Caco-2 (cell line): ENCODE measurements at regions of chr4 and their contacts with region 1.

Region 1: DNA sequence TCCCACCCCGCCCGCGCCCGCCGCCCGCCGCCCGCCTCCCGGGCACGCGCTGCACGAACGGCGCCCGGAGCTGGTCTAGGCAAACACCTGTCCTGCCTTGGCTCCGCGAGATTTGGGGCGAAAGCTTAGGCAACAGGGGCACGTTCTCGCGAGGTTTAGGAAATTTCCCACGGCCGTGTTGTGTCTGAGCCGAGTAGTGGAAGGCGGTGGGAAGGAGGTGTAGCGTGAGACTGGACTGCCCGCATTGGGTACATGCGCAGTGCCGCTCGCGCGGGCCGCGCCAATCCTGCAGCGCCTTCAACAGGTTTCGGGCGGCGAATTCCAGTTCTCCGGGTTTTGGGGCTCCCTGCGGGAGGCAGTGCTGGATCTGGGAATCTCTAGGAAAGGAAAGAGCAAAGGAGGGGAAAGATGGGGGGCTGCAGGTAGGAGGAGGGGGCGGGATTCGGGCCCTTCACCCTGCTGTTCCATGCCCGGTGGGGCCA is 1.3 kb upstream of the RBPJ start:
- DNase-seq: peak; percentile 98 to 99
- H3K4me3 ChIP-seq: peak overlapping the region; percentile 72
- H3K4me3 Mint-ChIP-seq: peak overlapping the region; percentile 88
- H3K27ac Mint-ChIP-seq: peak overlapping the region; percentile 76
- H3K4me1 ChIP-seq: peaks cover 12% of the 10 kb centered on the region; the same call in 1 of the 2 replicates
- H3K4me1 Mint-ChIP-seq: peaks cover 5% of the 10 kb centered on the region
- H3K27me3 ChIP-seq: no peaks in the 10 kb centered on the region
- H3K27me3 Mint-ChIP-seq: no peaks in the 10 kb centered on the region
- CTCF ChIP-seq: peak in 1 of 2 experiments; percentile 14

Region 2: DNA sequence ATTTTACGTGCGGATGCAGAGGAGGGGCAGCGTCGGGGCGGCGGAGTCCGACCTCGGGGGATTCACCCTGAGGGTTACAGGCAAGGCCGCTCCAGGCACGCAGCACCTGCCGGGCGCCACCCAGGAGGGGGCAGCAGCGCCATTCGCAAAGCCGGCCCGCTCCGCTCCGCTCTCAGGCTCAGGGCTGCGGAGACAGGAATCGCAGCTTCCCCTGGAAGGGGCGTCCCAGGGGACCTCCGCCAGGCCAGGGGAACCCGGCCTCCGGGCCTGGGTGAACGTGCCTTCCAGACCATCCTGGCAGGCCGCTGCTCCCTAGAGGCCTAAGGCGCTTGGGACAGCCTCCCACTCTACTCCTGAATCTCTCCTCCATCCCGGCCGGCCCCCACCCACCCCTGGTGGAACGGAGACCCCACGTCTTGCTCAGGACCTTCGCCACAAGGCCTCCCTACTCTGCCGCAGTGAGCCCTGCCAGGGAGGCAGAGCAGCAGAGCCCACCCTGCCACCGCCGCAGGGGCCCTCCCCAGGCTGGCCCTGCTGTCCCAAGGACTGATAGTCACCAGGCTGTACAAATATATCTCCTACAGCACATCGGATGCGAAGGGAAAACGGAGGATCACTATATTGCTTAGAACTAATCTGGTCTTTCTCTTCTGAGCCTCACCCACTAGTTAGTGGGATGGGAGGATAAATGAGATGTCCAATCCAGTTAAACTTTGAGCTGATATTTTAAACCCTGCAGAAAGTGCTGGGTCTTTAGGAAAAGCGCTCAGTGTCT is 290.5 kb before region 1 on chr4:
- CTCF ChIA-PET with region 1: no interaction called
- POLR2A ChIA-PET with region 1: no interaction called
- intact Hi-C with region 1: loop called (anchors 10 kb)
- DNase-seq: peak; percentile 53 to 71
- H3K4me3 ChIP-seq: no peak overlapping the region
- H3K4me3 Mint-ChIP-seq: no peak overlapping the region
- H3K27ac Mint-ChIP-seq: no peak overlapping the region
- H3K4me1 ChIP-seq: 0 out of 2 replicates have a peak, but pooled peaks cover 8% of the 10 kb centered on the region
- H3K4me1 Mint-ChIP-seq: peaks cover 9% of the 10 kb centered on the region
- H3K27me3 ChIP-seq: no peaks in the 10 kb centered on the region
- H3K27me3 Mint-ChIP-seq: no peaks in the 10 kb centered on the region
- CTCF ChIP-seq: peak; percentile 57 to 80

Region 3: GRCh38 chr4:26171941-26172340 is 147.6 kb before region 1 on chr4:
- CTCF ChIA-PET with region 1: no interaction called
- POLR2A ChIA-PET with region 1: no interaction called
- intact Hi-C with region 1: loop called (anchors 5 kb)
- DNase-seq: no peak
- H3K4me3 ChIP-seq: no peak overlapping the region
- H3K4me3 Mint-ChIP-seq: no peak overlapping the region
- H3K27ac Mint-ChIP-seq: no peak overlapping the region
- H3K4me1 ChIP-seq: peaks cover 28% of the 10 kb centered on the region
- H3K4me1 Mint-ChIP-seq: peaks cover 8% of the 10 kb centered on the region
- H3K27me3 ChIP-seq: no peaks in the 10 kb centered on the region
- H3K27me3 Mint-ChIP-seq: no peaks in the 10 kb centered on the region
- CTCF ChIP-seq: no peak

Region 4: DNA sequence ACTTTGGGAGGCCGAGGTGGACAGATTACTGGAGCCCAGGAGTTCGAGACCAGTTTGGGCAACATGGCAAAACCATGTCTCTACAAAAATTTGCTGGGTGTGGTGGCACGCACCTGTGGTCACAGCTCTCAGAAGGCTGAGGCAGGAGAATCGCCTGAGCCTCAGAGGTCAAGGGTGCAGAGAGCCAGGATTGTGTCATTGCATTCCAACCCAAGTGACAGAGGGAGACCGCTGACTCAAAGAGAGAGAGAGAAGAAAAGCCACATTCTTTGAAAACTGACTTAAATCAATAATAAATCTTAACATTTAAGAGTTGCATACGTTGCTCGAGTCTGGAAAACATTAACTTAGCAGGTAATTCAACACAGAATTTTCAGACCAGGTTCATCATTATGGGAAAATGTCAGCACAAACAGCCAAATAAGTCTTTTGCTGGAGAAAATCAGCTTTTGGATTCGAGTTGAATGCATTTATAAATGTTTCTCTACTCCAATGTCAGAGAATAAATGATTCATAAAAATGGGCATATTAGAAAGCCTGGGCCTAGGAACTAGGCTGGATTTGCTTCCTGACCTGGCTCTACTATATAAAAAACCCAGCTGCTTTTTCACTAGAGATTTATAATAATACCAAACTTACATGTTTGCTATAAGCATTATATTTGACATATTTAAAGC is 67.0 kb before region 1 on chr4:
- CTCF ChIA-PET with region 1: no interaction called
- POLR2A ChIA-PET with region 1: no interaction called
- intact Hi-C with region 1: loop called (anchors 1 kb)
- DNase-seq: peak; percentile 69 to 78
- H3K4me3 ChIP-seq: no peak overlapping the region
- H3K4me3 Mint-ChIP-seq: peak overlapping the region; percentile 25
- H3K27ac Mint-ChIP-seq: no peak overlapping the region
- H3K4me1 ChIP-seq: peaks cover 10% of the 10 kb centered on the region
- H3K4me1 Mint-ChIP-seq: peaks cover 7% of the 10 kb centered on the region
- H3K27me3 ChIP-seq: no peaks in the 10 kb centered on the region
- H3K27me3 Mint-ChIP-seq: peaks cover 3% of the 10 kb centered on the region
- CTCF ChIP-seq: no peak

Region 5: GRCh38 chr4:26410385-26411293 is 91.1 kb after region 1 on chr4:
- CTCF ChIA-PET with region 1: no interaction called
- POLR2A ChIA-PET with region 1: no interaction called
- intact Hi-C with region 1: no loop called
- DNase-seq: peak in 1 of 2 experiments; percentile 51
- H3K4me3 ChIP-seq: no peak overlapping the region
- H3K4me3 Mint-ChIP-seq: no peak overlapping the region
- H3K27ac Mint-ChIP-seq: no peak overlapping the region
- H3K4me1 ChIP-seq: peaks cover 6% of the 10 kb centered on the region
- H3K4me1 Mint-ChIP-seq: no peaks in the 10 kb centered on the region
- H3K27me3 ChIP-seq: no peaks in the 10 kb centered on the region
- H3K27me3 Mint-ChIP-seq: no peaks in the 10 kb centered on the region
- CTCF ChIP-seq: peak; percentile 42 to 64